CD8-positive, alpha-beta T cell (primary cell): ENCODE measurements at regions of chr10 and their contacts with region 1.

Region 1: DNA sequence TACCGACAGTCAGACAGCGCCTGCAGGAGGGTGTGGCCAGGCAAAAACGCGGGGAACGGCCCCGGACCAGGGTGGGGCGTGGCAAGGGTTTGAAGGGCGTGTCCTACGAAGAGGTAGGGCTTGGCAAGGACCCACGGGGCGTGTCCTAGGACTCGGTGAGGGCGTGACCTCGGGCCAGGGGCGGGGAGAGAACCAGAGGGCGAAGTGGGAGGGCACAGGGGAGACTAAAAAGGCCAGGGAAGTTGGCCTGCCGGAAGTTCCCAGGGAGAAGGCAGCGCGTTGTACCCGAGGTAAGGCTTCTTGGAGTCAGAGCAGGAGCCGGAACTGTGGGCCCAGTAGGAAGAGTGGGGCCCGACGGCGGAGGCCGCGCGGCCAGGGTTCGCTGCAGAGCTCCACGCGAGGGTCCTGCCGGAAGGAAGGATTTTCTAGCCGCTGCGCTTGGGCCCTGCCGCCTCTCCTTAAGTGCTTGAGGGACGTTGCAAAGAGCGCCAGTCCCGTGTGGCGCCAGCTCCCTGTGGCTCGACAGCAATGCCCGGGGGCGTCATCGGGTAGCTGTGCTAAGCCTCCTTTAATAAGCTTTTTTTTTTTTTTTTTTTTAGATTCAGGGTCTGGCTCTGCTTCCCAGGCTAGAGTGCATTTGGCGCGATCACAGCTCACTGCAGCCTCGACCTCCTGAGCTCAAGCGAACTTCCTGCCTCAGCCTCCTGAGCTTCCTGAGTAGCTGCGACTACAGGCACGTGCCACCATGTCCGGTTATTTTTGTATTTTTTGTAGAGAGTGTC is at the start of gene PTER:
- DNase-seq: peak; percentile 93 to 99 (median 96)
- ATAC-seq: peak; percentile 99
- H3K4me3 ChIP-seq: peak within 1 kb of the TSS; percentile 77 to 79
- H3K4me3 Mint-ChIP-seq: peak within 1 kb of the TSS; percentile 88
- H3K27ac ChIP-seq: peak within 1 kb of the TSS; percentile 61 to 77
- H3K27ac Mint-ChIP-seq: peak within 1 kb of the TSS; percentile 84
- H3K4me1 ChIP-seq: peaks cover 31% of the 10 kb centered on the region
- H3K4me1 Mint-ChIP-seq: peaks cover 51% of the 10 kb centered on the region
- H3K27me3 ChIP-seq: no peaks in the 10 kb centered on the region
- H3K27me3 Mint-ChIP-seq: no peaks in the 10 kb centered on the region
- CTCF ChIP-seq: no peak
- total RNA-seq, gene PTER: 6.4 TPM

Region 2: DNA sequence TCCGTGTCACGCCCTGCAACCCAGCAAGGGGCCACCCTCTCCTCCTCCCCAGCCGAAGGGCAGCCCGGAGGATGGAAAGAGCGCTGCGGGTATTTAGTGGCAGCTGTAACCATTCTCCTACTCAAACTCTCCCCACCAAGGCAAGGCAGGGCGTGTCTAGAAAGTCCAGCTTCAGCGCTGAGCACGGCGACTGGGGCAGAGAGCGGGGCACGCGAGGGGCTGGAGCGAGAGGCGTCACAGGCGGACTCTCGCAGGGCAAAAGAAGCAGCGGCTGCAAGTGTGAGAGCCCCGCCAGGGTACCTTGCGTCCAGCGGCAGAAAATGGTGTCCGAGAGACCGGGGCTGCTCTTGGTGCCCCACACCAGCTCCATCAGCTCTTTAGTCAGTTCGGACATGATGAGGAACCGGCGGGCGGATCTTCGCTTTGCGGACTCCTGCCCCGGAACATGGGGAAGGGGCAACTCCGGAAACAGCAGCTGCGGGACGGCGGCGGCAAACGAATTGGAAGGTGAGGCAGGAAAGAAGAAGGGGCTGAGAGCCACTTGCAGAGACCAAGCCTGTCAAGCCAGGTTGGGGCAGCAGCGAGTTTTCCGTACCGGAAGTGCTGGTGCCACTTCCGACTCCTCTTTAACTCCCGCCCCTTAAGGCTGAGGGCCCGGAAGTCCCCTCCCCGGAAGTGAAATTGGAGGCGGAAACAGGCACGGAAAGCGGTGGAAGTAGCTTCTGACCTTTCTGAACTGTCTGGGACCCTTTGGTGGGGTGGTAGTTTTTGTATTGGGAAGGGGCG is 576.9 kb before region 1 on chr10 and contains the start of gene MINDY3:
- CTCF ChIA-PET with region 1: no interaction called
- POLR2A ChIA-PET with region 1: no interaction called
- intact Hi-C with region 1: loop called (anchors 1 to 2 kb)
- DNase-seq: peak; percentile 70 to 93 (median 85)
- ATAC-seq: peak; percentile 89
- H3K4me3 ChIP-seq: peak within 1 kb of the TSS; percentile 91 to 96
- H3K4me3 Mint-ChIP-seq: peak within 1 kb of the TSS; percentile 100
- H3K27ac ChIP-seq: peak within 1 kb of the TSS; percentile 62 to 63
- H3K27ac Mint-ChIP-seq: peak within 1 kb of the TSS; percentile 96
- H3K4me1 ChIP-seq: peaks cover 23% of the 10 kb centered on the region
- H3K4me1 Mint-ChIP-seq: peaks cover 43% of the 10 kb centered on the region
- H3K27me3 ChIP-seq: peaks cover 0 to 2% of the 10 kb centered on the region in 2 experiments
- H3K27me3 Mint-ChIP-seq: peaks cover 13% of the 10 kb centered on the region
- CTCF ChIP-seq: no peak
- total RNA-seq, gene MINDY3: 34.0 to 34.6 TPM

Region 3: GRCh38 chr10:16787361-16787791 is 350.4 kb after region 1 on chr10:
- CTCF ChIA-PET with region 1: no interaction called
- POLR2A ChIA-PET with region 1: no interaction called
- intact Hi-C with region 1: loop called in 1 of 2 experiments (anchors 10 kb)
- DNase-seq: peak; percentile 38 to 93 (median 71)
- ATAC-seq: peak; percentile 97
- H3K4me3 ChIP-seq: peak overlapping the region in 1 of 2 experiments; percentile 6
- H3K4me3 Mint-ChIP-seq: peak overlapping the region; percentile 65
- H3K27ac ChIP-seq: peak overlapping the region; percentile 71 to 94
- H3K27ac Mint-ChIP-seq: peak overlapping the region; percentile 99
- H3K4me1 ChIP-seq: peaks cover 23% of the 10 kb centered on the region
- H3K4me1 Mint-ChIP-seq: peaks cover 32% of the 10 kb centered on the region
- H3K27me3 ChIP-seq: no peaks in the 10 kb centered on the region
- H3K27me3 Mint-ChIP-seq: no peaks in the 10 kb centered on the region
- CTCF ChIP-seq: no peak